ENCODE measurements at regions of chr9 and their contacts with region 1.

Region 1: GRCh38 chr9:105083256-105083655 is 155.3 kb upstream of the ABCA1 start:
- DNase-seq: no peak
- H3K4me3 ChIP-seq: no peak overlapping the region
- H3K27ac ChIP-seq: no peak overlapping the region
- H3K4me1 ChIP-seq: peaks cover 26% of the 10 kb centered on the region
- H3K27me3 ChIP-seq: no peaks in the 10 kb centered on the region
- CTCF ChIP-seq: no peak

Region 2: GRCh38 chr9:104944886-104945285 is 138.4 kb before region 1 on chr9:
- CTCF ChIA-PET with region 1: interaction called, 14 read pairs
- POLR2A ChIA-PET with region 1: no interaction called
- intact Hi-C with region 1: no loop called
- DNase-seq: no peak
- H3K4me3 ChIP-seq: no peak overlapping the region
- H3K27ac ChIP-seq: peak overlapping the region; percentile 50
- H3K4me1 ChIP-seq: peaks cover 27% of the 10 kb centered on the region
- H3K27me3 ChIP-seq: no peaks in the 10 kb centered on the region
- CTCF ChIP-seq: no peak